OCI-LY7 (cell line): ENCODE measurements at regions of chr5 and their contacts with region 1.

Region 1: DNA sequence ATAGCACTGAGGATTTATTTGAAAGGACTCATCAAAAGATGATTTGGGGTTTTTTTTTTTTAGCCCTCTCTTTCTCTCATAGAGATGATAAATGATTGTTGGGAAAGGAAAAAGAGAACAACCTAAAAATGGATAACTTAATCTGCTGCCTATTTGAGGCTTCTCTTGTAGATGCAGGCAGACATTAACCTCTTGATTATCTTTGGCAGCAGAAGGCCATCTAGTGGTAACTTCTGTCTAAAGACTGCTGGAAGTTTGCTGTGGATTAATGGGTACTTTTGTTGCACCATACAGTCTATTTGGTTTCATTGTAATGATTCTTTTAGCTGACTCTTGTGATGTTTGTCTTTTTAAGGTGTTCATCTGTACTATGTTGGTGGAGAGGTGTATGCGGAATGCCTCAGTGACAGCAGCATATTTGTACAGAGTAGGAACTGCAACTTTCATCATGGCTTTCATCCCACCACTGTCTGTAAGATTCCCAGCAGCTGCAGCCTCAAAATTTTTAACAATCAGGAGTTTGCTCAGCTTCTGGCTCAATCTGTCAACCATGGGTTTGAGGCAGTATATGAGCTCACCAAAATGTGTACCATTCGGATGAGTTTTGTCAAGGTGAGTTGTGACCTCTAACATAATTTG is 18.8 kb downstream of the SMIM32 start:
- DNase-seq: peak; percentile 76
- H3K4me3 ChIP-seq: no peak overlapping the region
- H3K27ac ChIP-seq: peak overlapping the region; percentile 24
- H3K4me1 ChIP-seq: peaks cover 34% of the 10 kb centered on the region
- CTCF ChIP-seq: peak; percentile 94

Region 2: DNA sequence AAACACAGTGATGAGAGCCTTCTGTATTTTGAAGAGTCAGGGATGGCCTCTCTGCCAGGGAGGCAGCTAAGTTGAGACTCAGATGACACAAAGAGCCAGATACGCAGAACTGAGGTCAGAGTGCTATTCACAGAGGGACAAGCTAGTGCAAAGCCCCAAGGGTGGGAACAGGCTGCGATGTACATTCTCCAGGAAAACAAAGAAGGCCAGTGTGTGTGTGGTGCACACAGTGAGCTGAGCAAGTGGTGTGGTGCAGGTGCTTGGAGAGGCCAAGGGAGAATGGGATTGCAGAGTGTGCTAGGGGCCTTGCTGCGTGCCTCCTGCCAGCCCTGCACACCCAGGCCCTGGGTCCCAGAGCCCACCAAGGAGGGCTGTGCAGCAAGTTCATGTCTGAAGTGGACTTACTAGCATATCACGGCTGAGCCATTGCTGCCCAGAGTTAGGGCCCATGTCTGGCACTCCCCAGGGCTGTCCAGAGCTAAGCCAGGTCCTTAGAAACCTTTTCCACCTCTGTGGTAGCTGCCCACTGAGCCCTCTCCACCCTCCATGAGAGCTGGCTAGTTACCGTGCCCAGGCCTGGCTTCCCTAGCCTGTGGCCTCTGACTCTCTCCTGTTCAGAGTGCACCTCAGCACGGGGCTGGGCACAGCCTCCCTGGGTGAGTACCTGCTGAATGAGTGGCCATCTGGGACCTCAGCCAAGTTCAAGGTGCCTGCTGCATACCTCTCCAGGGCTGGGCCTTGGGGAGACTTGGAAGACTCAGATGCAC is 330.4 kb before region 1 on chr5:
- CTCF ChIA-PET with region 1: no interaction called
- POLR2A ChIA-PET with region 1: no interaction called
- intact Hi-C with region 1: no loop called
- DNase-seq: no peak
- H3K4me3 ChIP-seq: no peak overlapping the region
- H3K27ac ChIP-seq: no peak overlapping the region
- H3K4me1 ChIP-seq: no peaks in the 10 kb centered on the region
- CTCF ChIP-seq: no peak

Region 3: GRCh38 chr5:135944967-135945560 is 229.1 kb before region 1 on chr5:
- CTCF ChIA-PET with region 1: no interaction called
- POLR2A ChIA-PET with region 1: interaction called, 3 read pairs
- intact Hi-C with region 1: loop called (anchors 1 kb)
- DNase-seq: peak; percentile 84
- H3K4me3 ChIP-seq: no peak overlapping the region
- H3K27ac ChIP-seq: no peak overlapping the region
- H3K4me1 ChIP-seq: no peaks in the 10 kb centered on the region
- CTCF ChIP-seq: peak; percentile 95

Region 4: GRCh38 chr5:136080483-136081216 is 93.5 kb before region 1 on chr5:
- CTCF ChIA-PET with region 1: no interaction called
- POLR2A ChIA-PET with region 1: interaction called, 3 read pairs
- intact Hi-C with region 1: loop called (anchors 5 kb)
- DNase-seq: no peak
- H3K4me3 ChIP-seq: no peak overlapping the region
- H3K27ac ChIP-seq: no peak overlapping the region
- H3K4me1 ChIP-seq: peaks cover 3% of the 10 kb centered on the region
- CTCF ChIP-seq: no peak

Region 5: DNA sequence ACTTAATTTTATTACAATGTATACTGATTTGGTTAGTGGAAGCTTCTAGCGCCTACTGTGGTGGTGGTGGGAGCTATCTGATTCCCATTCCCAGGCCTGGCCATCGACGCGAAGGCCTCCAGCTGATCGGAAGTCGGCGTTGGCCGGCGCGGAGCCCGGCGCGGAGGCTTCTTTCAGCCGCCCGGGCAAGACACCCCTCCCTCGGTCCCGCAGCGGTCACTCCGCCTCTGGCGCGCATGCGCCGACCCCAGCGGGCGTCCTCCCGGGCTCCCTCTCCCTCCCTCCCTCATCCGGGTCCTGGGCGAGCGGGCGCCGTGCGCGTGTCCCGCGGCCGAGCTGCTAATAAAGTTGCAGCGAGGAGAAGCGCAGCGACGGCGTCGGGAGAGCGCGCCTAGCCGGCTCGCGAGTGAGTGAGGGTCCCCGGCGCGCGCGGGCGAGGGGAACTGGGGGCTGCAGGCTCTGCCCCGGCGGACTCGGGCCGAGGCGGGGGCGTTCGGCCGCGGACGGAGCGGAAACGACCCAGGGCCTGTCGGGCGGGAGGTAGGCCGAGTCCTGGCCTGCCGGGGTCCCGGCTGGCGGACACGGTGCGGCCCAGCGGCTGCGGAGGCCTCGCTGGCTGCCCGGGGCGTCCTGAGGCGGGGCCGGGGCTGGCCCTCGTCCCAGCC is 41.5 kb before region 1 on chr5 and contains the start of gene SMAD5:
- CTCF ChIA-PET with region 1: no interaction called
- POLR2A ChIA-PET with region 1: interaction called, 8 read pairs
- intact Hi-C with region 1: loop called (anchors 2 kb)
- DNase-seq: peak; percentile 93
- H3K4me3 ChIP-seq: peak within 1 kb of the TSS; percentile 95
- H3K27ac ChIP-seq: peak within 1 kb of the TSS; percentile 78
- H3K4me1 ChIP-seq: peaks cover 35% of the 10 kb centered on the region
- CTCF ChIP-seq: 0 out of 2 replicates have a peak, but pooled peaks have one; percentile 5
- total RNA-seq, gene SMAD5: 32.9 and 62.0 TPM in 2 replicates

Region 6: GRCh38 chr5:136409000-136409399 is 234.9 kb after region 1 on chr5:
- CTCF ChIA-PET with region 1: no interaction called
- POLR2A ChIA-PET with region 1: no interaction called
- intact Hi-C with region 1: no loop called
- DNase-seq: no peak
- H3K4me3 ChIP-seq: no peak overlapping the region
- H3K27ac ChIP-seq: no peak overlapping the region
- H3K4me1 ChIP-seq: no peaks in the 10 kb centered on the region
- CTCF ChIP-seq: no peak

Region 7: DNA sequence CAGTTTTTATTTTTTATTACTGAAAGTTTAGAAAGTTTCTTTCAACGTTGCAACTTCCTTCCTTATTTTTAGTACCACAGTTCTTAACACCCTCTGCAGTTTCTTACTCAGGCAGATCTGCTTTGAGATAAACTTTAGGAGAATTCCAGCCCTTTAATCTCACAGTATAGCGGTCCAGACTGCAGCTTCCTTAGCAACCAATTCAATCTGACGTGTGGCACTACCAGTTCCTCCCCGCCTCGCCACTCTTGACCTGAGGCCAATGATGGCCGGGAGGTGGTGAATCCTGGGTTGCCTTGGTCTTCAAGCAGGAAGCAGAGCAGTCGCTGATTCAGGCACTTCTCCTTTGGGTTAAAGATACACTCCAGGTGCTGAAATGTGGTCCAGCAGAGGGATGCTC is 525.5 kb after region 1 on chr5:
- CTCF ChIA-PET with region 1: no interaction called
- POLR2A ChIA-PET with region 1: no interaction called
- intact Hi-C with region 1: no loop called
- DNase-seq: no peak
- H3K4me3 ChIP-seq: no peak overlapping the region
- H3K27ac ChIP-seq: no peak overlapping the region
- H3K4me1 ChIP-seq: no peaks in the 10 kb centered on the region
- CTCF ChIP-seq: no peak